Heart right ventricle (tissue), 16 donors: ENCODE measurements at regions of chr19 and their contacts with region 1.

Region 1: DNA sequence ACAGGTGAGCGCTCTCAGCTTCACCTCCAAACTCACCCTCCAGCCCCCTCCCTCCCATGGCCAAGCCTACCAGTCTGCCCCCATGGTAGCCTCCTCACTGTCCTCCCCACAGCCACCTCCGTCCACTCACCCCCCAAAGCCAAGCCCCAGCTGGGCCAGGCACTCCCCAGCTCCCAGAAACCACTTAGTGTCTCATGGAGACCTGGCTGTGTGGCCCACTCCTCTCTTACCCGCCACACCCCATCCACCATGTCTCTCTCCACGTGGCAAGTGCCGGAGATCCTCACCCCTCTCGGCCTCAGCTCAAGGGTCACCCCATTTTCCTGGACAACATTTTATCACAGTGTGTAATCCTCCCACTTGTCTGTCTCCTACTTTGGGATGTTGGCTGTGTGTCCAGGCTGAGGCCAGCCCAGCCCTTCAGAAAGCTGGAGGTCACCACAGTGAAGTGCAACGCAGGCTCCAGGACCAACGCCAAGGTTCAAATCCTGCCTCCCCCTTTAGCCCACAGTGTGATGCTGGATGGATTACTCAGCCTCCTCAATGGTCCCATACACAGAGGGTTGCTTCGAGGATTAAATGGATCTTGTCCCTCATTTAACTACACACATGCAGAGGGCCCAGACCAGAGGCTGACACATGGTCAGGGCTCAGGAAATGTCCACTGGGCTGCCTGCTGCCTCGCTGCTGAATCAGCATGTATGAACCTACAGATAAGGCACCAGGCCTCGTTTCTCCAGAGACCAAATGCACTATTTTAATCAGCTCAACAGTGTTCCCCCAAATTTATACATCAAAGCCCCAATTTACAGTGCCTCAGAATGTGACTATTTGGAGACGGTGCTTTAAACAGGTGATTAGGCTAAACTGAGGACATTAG is 71.3 kb downstream of the CEBPG start:
- DNase-seq: no peak
- ATAC-seq: peak in 1 of 8 donors; percentile 26
- H3K4me3 ChIP-seq: no peak overlapping the region
- H3K27ac ChIP-seq: no peak overlapping the region
- H3K4me1 ChIP-seq: no peaks in the 10 kb centered on the region
- H3K27me3 ChIP-seq: no peaks in the 10 kb centered on the region
- CTCF ChIP-seq: no peak

Region 2: DNA sequence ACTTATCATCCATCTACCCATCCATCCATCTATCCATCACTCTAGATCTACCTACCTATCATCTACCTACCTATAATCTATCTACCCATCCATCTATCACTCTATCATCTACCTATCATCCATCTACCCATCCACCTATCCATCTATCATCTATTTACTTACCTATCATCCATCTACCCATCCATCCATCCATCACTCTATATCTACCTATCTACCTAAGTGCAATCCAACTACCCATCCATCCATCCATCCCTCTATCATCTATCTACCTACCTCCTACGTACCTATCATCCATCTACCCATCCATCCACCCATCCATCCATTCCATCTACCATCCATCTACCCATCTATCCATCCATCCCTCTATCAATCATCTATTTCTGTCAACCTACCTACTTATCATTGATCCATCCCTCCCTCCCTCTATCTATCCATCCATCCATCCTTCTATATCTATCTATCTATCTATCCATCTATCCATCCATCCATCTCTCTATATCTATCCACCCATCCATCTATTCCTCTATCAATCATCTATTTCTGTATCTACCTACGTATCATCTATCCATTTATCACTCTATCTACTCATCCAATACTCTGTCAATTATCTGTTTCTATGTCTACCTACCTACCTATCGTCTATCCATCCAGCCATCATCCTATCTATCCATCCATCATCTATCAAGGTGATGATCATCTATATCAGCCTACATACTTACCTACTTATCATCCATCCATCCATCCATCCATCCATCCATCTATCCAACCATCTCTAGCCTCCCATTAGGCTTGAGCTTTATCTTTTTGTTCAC is 22.2 kb before region 1 on chr19:
- intact Hi-C with region 1: loop called in 1 of 10 experiments (anchors 1 kb)
- DNase-seq: no peak
- ATAC-seq: no peak
- H3K4me3 ChIP-seq: no peak overlapping the region
- H3K27ac ChIP-seq: no peak overlapping the region
- H3K4me1 ChIP-seq: no peaks in the 10 kb centered on the region
- H3K27me3 ChIP-seq: no peaks in the 10 kb centered on the region
- CTCF ChIP-seq: no peak